ENCODE measurements at regions of chr1 and their contacts with region 1.

Region 1: GRCh38 chr1:36150296-36151132 is 1.2 kb upstream of the TRAPPC3 start:
- DNase-seq: peak in 1 of 2 donors; percentile 97
- H3K4me3 ChIP-seq: peak overlapping the region; percentile 5 to 29
- H3K27ac ChIP-seq: peak overlapping the region; percentile 99
- H3K4me1 ChIP-seq: peaks cover 59% of the 10 kb centered on the region
- H3K27me3 ChIP-seq: no peaks in the 10 kb centered on the region
- CTCF ChIP-seq: no peak
- POLR2A ChIP-seq: peak in 1 of 2 donors; percentile 58

Region 2: DNA sequence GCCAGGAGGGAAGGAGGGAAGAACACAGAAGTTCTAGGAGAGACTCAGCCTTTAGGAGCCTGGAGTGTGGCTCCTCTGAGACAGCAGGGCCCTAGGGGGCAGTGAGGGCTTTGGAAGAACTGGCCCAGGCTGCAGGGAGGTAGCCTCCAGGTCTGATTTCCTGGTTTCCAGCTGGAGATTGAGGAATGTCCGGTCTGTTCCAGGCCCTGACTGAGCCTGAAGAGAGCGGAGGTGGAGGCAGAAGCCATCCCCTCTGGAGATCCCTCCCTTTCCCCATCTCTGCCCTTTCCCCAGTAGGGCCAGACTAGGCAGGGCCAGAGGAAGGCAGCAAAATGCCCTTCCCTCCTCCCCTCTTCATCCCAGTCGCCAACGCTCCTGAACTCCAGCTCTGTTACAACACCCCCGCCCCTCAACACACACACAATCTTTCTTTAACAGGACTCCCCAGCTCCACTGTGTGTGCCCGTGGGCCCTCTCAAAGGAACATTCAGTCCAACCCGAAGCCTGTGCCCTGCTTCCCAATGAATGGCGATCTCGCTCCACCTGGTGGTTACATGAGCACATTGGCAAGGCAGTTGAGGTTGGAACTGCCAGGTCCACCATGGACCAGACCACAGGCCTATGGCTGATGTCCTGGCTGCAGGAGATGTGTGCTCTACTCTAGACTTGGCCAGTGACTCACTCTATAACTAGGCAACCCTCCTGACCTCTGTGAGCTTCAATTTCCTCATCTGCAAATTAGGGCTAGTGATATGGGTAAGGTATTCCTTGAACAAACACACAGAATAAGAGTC is 37.5 kb after region 1 on chr1:
- intact Hi-C with region 1: loop called (anchors 5 kb)
- DNase-seq: peak in 1 of 2 donors; percentile 89
- H3K4me3 ChIP-seq: no peak overlapping the region
- H3K27ac ChIP-seq: peak overlapping the region; percentile 82
- H3K4me1 ChIP-seq: peaks cover 8% of the 10 kb centered on the region
- H3K27me3 ChIP-seq: no peaks in the 10 kb centered on the region
- CTCF ChIP-seq: peak; percentile 80 to 94 (median 84)
- POLR2A ChIP-seq: no peak

Region 3: GRCh38 chr1:36223993-36224536 is 73.6 kb after region 1 on chr1 and contains the start of gene THRAP3:
- intact Hi-C with region 1: loop called (anchors 10 kb)
- DNase-seq: peak; percentile 100
- H3K4me3 ChIP-seq: peak within 1 kb of the TSS; percentile 92 to 95
- H3K27ac ChIP-seq: peak within 1 kb of the TSS; percentile 97
- H3K4me1 ChIP-seq: peaks cover 50% of the 10 kb centered on the region
- H3K27me3 ChIP-seq: no peaks in the 10 kb centered on the region
- CTCF ChIP-seq: no peak
- POLR2A ChIP-seq: peak; percentile 87 to 97
- total RNA-seq, gene THRAP3: 57.7 TPM

Region 4: GRCh38 chr1:36285448-36286101 is 135.1 kb after region 1 on chr1:
- intact Hi-C with region 1: loop called (anchors 10 kb)
- DNase-seq: no peak
- H3K4me3 ChIP-seq: no peak overlapping the region
- H3K27ac ChIP-seq: no peak overlapping the region
- H3K4me1 ChIP-seq: peaks cover 10% of the 10 kb centered on the region
- H3K27me3 ChIP-seq: no peaks in the 10 kb centered on the region
- CTCF ChIP-seq: peak; percentile 45 to 79 (median 71)
- POLR2A ChIP-seq: no peak

Region 5: DNA sequence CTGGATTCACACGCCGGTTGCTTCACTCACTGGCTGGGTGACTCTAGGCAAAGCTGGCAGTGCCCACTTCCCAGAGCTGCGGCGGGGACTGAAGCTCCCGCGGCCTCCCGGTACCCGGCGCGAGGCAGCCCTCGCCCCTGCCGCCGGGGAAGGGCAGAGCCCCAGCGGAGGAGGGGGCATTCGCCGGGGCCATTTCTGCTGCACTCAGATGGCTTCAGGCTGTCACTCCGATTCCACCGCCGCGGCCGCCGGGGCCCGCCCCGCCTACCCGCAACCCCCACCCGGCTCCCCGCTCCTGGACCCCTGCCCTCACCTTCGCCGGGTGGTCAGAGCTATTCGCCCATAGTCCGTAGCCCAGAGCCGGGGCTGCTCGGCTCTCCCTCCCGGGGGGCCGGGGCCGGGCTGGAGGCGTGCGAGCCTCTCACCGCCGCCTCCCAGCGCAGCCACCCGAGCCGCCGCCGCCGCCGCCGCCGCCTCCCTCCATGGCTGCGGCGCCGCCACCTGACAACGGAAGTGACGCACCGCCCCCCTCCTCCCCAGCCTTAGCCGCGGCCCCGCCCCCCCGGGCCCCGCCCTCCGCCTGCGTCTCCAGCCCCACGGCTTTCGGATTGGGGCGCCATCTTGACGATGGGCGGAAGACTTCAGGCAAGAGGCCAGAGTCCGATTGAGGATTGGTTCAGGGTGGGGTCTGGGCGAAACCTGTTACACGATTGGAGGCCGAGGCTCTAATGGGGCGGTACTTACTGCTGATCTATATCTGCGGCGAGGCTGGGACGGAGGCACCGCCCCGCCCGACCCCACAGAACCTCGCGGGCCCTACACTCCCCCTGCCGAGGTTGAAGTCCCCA is 235.1 kb after region 1 on chr1 and contains the start of gene STK40:
- intact Hi-C with region 1: loop called (anchors 10 kb)
- DNase-seq: peak in 1 of 2 donors; percentile 100
- H3K4me3 ChIP-seq: peak within 1 kb of the TSS; percentile 67 to 95
- H3K27ac ChIP-seq: peak within 1 kb of the TSS; percentile 99
- H3K4me1 ChIP-seq: peaks cover 47% of the 10 kb centered on the region
- H3K27me3 ChIP-seq: no peaks in the 10 kb centered on the region
- CTCF ChIP-seq: no peak
- POLR2A ChIP-seq: peak in 1 of 2 donors; percentile 96
- total RNA-seq, gene STK40: 35.4 TPM

Region 6: GRCh38 chr1:36411674-36412520 is 261.4 kb after region 1 on chr1:
- intact Hi-C with region 1: no loop called
- DNase-seq: no peak
- H3K4me3 ChIP-seq: no peak overlapping the region
- H3K27ac ChIP-seq: no peak overlapping the region
- H3K4me1 ChIP-seq: no peaks in the 10 kb centered on the region
- H3K27me3 ChIP-seq: no peaks in the 10 kb centered on the region
- CTCF ChIP-seq: no peak
- POLR2A ChIP-seq: no peak